Mammary epithelial cell (primary cell): ENCODE measurements at regions of chr11 and their contacts with region 1.

Region 1: GRCh38 chr11:47932544-47932943 is 47.8 kb upstream of the PTPRJ start:
- DNase-seq: no peak
- H3K4me3 ChIP-seq: no peak overlapping the region
- H3K27ac ChIP-seq: no peak overlapping the region
- H3K4me1 ChIP-seq: no peaks in the 10 kb centered on the region
- H3K27me3 ChIP-seq: no peaks in the 10 kb centered on the region
- CTCF ChIP-seq: no peak

Region 2: GRCh38 chr11:48109046-48109666 is 176.6 kb after region 1 on chr11:
- CTCF ChIA-PET with region 1: interaction called, 9 read pairs
- dilution Hi-C with region 1: loop called (anchors 10 kb)
- in situ Hi-C with region 1: loop called (anchors 5 kb)
- intact Hi-C with region 1: loop called (anchors 1 kb)
- DNase-seq: peak; percentile 35
- H3K4me3 ChIP-seq: no peak overlapping the region
- H3K27ac ChIP-seq: no peak overlapping the region
- H3K4me1 ChIP-seq: peaks cover 4% of the 10 kb centered on the region
- H3K27me3 ChIP-seq: peaks cover 1% of the 10 kb centered on the region
- CTCF ChIP-seq: peak; percentile 12 to 39

Region 3: DNA sequence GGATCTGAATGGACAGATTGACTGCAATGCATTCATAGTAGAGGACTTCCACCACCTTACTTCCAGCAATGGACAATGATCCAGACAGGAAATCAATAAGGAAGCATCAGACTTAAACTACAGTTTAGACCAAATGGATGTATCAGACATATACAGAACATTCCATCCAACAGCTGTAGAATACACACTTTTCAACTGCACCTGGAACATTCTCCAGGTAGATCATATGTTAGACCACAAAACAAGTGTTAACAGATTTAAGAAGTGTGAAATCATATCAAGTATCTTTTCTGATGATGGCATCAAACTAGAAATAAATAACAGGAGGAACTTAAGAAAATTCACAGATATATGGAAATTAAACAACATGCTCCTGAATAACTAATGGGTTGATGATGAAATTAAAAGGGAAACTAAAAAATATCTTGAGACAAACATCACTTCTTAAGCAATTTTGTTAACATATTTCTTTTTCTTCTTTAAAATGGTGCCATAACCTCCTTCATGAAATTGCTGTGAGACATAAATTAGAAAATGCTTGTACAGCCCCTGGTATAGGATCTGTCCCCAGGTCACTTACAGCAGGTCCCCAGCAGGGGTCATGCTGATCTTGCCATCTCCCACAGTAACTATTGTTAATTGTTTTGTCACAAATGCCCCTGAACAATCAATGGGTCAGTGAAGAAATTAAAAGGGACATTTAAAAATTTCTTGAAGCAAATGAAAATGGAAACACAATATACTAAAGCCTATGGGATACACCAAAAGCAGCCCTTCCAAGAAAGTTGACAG is 184.1 kb after region 1 on chr11:
- CTCF ChIA-PET with region 1: interaction called, 5 read pairs
- dilution Hi-C with region 1: loop called (anchors 10 kb)
- in situ Hi-C with region 1: loop called in 1 of 2 experiments (anchors 5 kb)
- intact Hi-C with region 1: no loop called
- DNase-seq: peak; percentile 43
- H3K4me3 ChIP-seq: no peak overlapping the region
- H3K27ac ChIP-seq: no peak overlapping the region
- H3K4me1 ChIP-seq: no peaks in the 10 kb centered on the region
- H3K27me3 ChIP-seq: no peaks in the 10 kb centered on the region
- CTCF ChIP-seq: peak in 1 of 2 donors; percentile 31